ENCODE measurements at regions of chr4 and their contacts with region 1.

Region 1: GRCh38 chr4:183053681-183054080 is 45.4 kb upstream of the WWC2 start:
- DNase-seq: no peak
- ATAC-seq: no peak
- H3K4me3 ChIP-seq: no peak overlapping the region
- H3K27ac ChIP-seq: no peak overlapping the region
- H3K4me1 ChIP-seq: peaks cover 0 to 2% of the 10 kb centered on the region in 2 experiments; a peak in 2 of 5 replicates
- H3K27me3 ChIP-seq: no peaks in the 10 kb centered on the region
- CTCF ChIP-seq: no peak
- EP300 ChIP-seq: no peak
- POLR2A ChIP-seq: no peak
- RAD21 ChIP-seq: no peak

Region 2: GRCh38 chr4:182929296-182929945 is 124.3 kb before region 1 on chr4:
- CTCF ChIA-PET with region 1: no interaction called
- POLR2A ChIA-PET with region 1: no interaction called
- in situ Hi-C with region 1: no loop called
- intact Hi-C with region 1: no loop called
- DNase-seq: no peak
- ATAC-seq: no peak
- H3K4me3 ChIP-seq: no peak overlapping the region
- H3K27ac ChIP-seq: no peak overlapping the region
- H3K4me1 ChIP-seq: no peaks in the 10 kb centered on the region
- H3K27me3 ChIP-seq: peaks cover 0 to 9% of the 10 kb centered on the region in 2 experiments; a peak in 1 of 5 replicates
- CTCF ChIP-seq: no peak
- EP300 ChIP-seq: no peak
- POLR2A ChIP-seq: no peak
- RAD21 ChIP-seq: no peak

Region 3: GRCh38 chr4:182944484-182945213 is 109.0 kb before region 1 on chr4:
- CTCF ChIA-PET with region 1: no interaction called
- POLR2A ChIA-PET with region 1: no interaction called
- in situ Hi-C with region 1: no loop called
- intact Hi-C with region 1: loop called (anchors 5 kb)
- DNase-seq: no peak
- ATAC-seq: no peak
- H3K4me3 ChIP-seq: no peak overlapping the region
- H3K27ac ChIP-seq: no peak overlapping the region
- H3K4me1 ChIP-seq: peaks cover 0 to under 1% of the 10 kb centered on the region in 2 experiments; a peak in 1 of 5 replicates
- H3K27me3 ChIP-seq: no peaks in the 10 kb centered on the region
- CTCF ChIP-seq: no peak
- EP300 ChIP-seq: no peak
- POLR2A ChIP-seq: no peak
- RAD21 ChIP-seq: no peak

Region 4: DNA sequence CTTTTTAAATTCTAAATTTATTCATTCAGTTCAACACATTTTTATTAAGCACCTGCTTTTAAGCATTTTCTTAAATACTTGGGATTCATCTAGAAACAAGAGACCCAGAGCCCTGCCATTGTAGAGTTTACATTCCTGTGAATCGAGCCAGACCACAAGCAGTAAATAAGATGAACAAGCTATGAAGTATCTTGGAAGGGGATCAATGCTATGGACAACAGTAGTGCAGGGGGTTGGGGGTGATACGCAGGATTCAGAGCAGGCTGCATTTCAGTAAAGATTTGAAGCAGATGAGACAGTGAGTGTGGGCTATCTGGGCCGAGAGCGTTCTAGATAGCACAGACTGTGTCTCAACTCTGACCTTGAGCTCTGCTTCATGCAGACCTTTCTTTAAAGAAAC is 231.3 kb after region 1 on chr4:
- CTCF ChIA-PET with region 1: no interaction called
- POLR2A ChIA-PET with region 1: no interaction called
- in situ Hi-C with region 1: no loop called
- intact Hi-C with region 1: no loop called
- DNase-seq: no peak
- ATAC-seq: no peak
- H3K4me3 ChIP-seq: no peak overlapping the region
- H3K27ac ChIP-seq: no peak overlapping the region
- H3K4me1 ChIP-seq: no peaks in the 10 kb centered on the region
- H3K27me3 ChIP-seq: no peaks in the 10 kb centered on the region
- CTCF ChIP-seq: no peak
- EP300 ChIP-seq: no peak
- POLR2A ChIP-seq: no peak
- RAD21 ChIP-seq: no peak

Measured in K562 (cell line).